ENCODE measurements at regions of chr15 and their contacts with region 1.

Region 1: GRCh38 chr15:31391687-31392671 is 65.3 kb downstream of the KLF13 start:
- DNase-seq: peak; percentile 88 to 90
- ATAC-seq: peak; percentile 78 to 92 (median 84)
- H3K4me3 ChIP-seq: peak overlapping the region; percentile 93
- H3K4me3 Mint-ChIP-seq: peak overlapping the region; percentile 98
- H3K27ac ChIP-seq: peak overlapping the region; percentile 90
- H3K27ac Mint-ChIP-seq: peak overlapping the region; percentile 94
- H3K4me1 ChIP-seq: peaks cover 52% of the 10 kb centered on the region
- H3K4me1 Mint-ChIP-seq: peaks cover 57 to 79% of the 10 kb centered on the region in 2 donors
- H3K27me3 ChIP-seq: no peaks in the 10 kb centered on the region
- H3K27me3 Mint-ChIP-seq: no peaks in the 10 kb centered on the region
- CTCF ChIP-seq: no peak

Region 2: DNA sequence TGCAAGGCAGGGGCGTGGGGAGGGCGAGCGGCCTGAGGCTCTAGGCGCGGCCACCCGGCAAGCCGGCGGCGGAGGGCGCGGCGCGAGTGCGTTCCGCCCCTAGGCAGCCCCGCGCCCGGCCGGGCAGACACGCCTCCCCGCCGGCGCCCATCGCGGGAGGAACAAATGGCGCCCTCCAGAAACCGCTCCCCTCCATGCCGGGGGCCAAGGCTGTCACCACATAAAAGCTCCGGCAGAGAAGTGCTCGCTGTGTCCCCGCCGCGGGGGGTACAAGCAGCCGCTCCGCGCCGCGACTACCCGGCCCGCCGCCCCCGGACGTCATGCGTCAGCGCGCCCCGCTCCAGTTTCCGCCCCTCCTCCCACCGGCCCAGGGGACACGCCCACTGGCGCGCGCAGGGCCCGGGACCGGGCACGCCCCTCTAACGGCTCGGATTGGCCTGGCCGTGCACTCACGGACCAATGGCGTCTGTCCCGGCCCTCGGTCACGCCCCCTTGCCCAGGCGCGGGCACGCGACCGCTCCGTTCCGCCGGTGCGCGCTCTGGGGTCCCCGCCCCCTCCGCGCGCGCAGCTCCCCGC is 65.7 kb before region 1 on chr15:
- intact Hi-C with region 1: loop called (anchors 5 kb)
- DNase-seq: peak; percentile 99 to 100
- ATAC-seq: peak; percentile 73 to 91 (median 75)
- H3K4me3 ChIP-seq: peak overlapping the region; percentile 44
- H3K4me3 Mint-ChIP-seq: peak overlapping the region; percentile 87
- H3K27ac ChIP-seq: peak overlapping the region; percentile 88
- H3K27ac Mint-ChIP-seq: peak overlapping the region; percentile 80 to 93
- H3K4me1 ChIP-seq: peaks cover 38% of the 10 kb centered on the region
- H3K4me1 Mint-ChIP-seq: peaks cover 51% of the 10 kb centered on the region in 2 donors
- H3K27me3 ChIP-seq: no peaks in the 10 kb centered on the region
- H3K27me3 Mint-ChIP-seq: no peaks in the 10 kb centered on the region
- CTCF ChIP-seq: no peak

Region 3: DNA sequence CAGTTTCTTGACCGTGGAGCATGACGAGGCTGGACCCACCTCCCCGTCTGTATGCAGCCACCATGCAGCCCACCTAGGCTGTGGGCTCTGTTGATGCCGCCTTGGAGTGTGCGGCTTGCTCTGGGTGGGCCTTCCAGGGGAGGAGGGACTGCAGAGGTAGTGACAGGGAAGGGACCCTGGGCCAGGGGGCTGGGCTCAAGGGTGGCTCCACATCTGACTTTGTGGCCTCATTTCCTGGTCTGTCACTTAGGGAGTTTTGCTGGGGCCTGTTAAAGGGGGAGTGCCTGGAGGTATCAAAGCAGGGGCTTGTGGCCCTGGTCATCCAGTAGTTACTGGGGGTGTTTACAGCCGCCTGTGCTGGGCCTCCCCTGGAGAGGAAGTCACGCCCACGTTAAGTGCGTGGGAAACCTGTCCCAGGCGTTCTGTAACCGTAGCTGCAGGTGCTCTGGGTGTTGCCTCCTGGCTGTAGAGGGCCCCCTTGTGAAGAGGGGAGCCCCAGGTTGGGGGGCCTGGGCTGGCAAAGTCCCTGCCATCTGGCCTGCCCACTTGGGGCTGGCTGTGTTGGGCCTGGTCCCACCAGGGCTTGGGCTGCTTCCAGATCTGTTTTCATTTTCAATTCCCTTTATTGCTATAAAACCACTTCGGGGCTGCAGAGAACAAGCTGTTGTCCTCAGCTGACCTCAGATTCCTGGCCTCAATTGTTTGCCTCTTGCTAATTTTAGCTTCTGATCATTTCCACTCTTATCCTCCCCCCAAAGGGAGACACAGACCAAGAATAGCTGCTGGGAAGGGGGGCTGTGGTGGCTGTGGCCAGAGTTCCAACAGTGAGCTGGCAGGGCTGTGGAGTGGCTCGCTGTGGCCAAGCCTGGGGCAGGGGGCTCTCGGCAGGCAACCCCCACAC is 38.8 kb before region 1 on chr15:
- intact Hi-C with region 1: loop called (anchors 5 kb)
- DNase-seq: peak in 1 of 2 donors; percentile 78
- ATAC-seq: peak; percentile 75 to 82 (median 79)
- H3K4me3 ChIP-seq: no peak overlapping the region
- H3K4me3 Mint-ChIP-seq: peak overlapping the region; percentile 79
- H3K27ac ChIP-seq: peak overlapping the region; percentile 88
- H3K27ac Mint-ChIP-seq: peak overlapping the region; percentile 88 to 96
- H3K4me1 ChIP-seq: peaks cover 99% of the 10 kb centered on the region
- H3K4me1 Mint-ChIP-seq: peaks cover 85 to 97% of the 10 kb centered on the region in 2 donors
- H3K27me3 ChIP-seq: no peaks in the 10 kb centered on the region
- H3K27me3 Mint-ChIP-seq: no peaks in the 10 kb centered on the region
- CTCF ChIP-seq: no peak

Region 4: DNA sequence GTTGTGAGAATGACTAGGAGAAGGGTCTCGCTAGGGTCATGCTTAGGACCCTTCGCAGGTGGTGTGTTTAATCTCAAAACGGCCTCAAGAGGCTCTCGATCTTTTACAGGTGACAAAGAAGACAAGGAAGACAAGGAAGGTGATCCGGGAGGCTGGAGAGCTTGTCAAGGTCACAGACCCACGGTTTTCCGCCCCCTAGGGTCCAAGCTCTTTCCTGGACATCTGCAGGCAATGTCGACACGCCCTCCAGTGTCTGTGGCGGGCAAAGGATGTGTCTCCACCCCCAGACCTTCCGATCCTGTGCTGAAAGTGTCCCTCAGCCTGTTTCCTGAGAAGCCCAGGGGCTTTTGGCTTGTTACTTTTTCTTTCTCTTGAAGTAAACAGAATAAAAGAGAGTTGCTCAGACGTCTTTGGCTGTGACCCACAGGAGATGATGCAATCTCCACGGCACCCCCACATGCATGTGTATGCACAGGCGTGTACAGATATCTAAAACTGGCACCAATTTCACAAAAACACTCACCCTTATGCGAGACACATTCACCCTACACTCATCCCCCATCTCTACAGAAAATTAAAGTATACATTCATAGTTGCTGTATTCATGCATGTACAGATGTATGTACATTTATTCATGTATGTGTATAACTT is 43.4 kb after region 1 on chr15:
- intact Hi-C with region 1: loop called (anchors 1 kb)
- DNase-seq: peak; percentile 73 to 94
- ATAC-seq: peak; percentile 70 to 87 (median 75)
- H3K4me3 ChIP-seq: peak overlapping the region; percentile 41
- H3K4me3 Mint-ChIP-seq: peak overlapping the region; percentile 88
- H3K27ac ChIP-seq: peak overlapping the region; percentile 95
- H3K27ac Mint-ChIP-seq: peak overlapping the region; percentile 98 to 100
- H3K4me1 ChIP-seq: peaks cover 78% of the 10 kb centered on the region
- H3K4me1 Mint-ChIP-seq: peaks cover 59 to 77% of the 10 kb centered on the region in 2 donors
- H3K27me3 ChIP-seq: no peaks in the 10 kb centered on the region
- H3K27me3 Mint-ChIP-seq: no peaks in the 10 kb centered on the region
- CTCF ChIP-seq: no peak